ENCODE measurements at regions of chr16 and their contacts with region 1.

Region 1: DNA sequence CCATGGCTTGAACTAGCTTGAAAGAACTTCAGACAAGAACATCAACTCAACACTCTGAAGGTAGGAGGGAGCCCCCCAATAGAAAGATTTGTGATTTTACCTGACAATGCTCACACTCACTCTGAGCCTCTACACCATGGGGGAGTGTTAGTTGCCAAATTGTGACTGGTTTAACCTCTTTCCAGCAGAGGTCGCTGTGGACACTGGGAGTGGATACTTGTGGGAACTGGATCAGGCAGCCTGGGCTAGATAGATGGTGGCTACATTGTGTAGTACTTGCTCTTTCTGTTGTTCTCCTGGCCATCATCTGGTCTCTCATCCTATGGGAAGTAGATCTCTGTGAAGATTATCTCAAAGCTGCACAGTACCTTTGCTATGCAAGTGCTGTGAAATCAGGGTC is 2.9 kb downstream of the SMPD3 start:
- DNase-seq: peak; percentile 77
- H3K4me3 Mint-ChIP-seq: no peak overlapping the region
- H3K27ac Mint-ChIP-seq: no peak overlapping the region
- H3K4me1 Mint-ChIP-seq: peaks cover 18% of the 10 kb centered on the region
- H3K27me3 Mint-ChIP-seq: peaks cover 71% of the 10 kb centered on the region

Region 2: DNA sequence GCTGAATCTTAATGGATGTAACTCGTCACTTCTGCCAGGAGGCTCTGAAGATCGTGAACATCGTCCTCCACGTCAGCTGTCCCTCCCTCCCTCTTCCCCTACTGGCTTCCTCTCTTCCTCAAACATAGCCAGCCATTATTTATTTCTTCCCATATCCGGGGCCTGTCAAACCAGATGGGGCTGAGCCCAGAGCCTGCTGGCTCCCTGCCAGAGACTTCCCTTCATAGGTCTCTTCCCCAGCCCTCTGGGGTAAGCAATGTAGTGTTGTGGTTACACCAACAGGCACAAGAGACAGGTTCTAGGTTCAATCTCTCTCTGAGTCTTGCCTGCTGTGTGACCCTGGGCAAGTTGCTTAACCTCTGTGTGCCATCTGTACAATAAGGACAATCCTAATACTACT is 53.5 kb after region 1 on chr16:
- CTCF ChIA-PET with region 1: no interaction called
- DNase-seq: no peak
- H3K4me3 Mint-ChIP-seq: no peak overlapping the region
- H3K27ac Mint-ChIP-seq: no peak overlapping the region
- H3K4me1 Mint-ChIP-seq: no peaks in the 10 kb centered on the region
- H3K27me3 Mint-ChIP-seq: peaks cover 34% of the 10 kb centered on the region

Region 3: GRCh38 chr16:68512183-68512582 is 66.7 kb after region 1 on chr16:
- CTCF ChIA-PET with region 1: interaction called, 32 read pairs
- DNase-seq: no peak
- H3K4me3 Mint-ChIP-seq: no peak overlapping the region
- H3K27ac Mint-ChIP-seq: no peak overlapping the region
- H3K4me1 Mint-ChIP-seq: peaks cover 6% of the 10 kb centered on the region
- H3K27me3 Mint-ChIP-seq: peaks cover 40% of the 10 kb centered on the region

Region 4: GRCh38 chr16:68520649-68521086 is 75.2 kb after region 1 on chr16:
- CTCF ChIA-PET with region 1: interaction called, 10 read pairs
- DNase-seq: peak; percentile 93
- H3K4me3 Mint-ChIP-seq: peak overlapping the region; percentile 23
- H3K27ac Mint-ChIP-seq: no peak overlapping the region
- H3K4me1 Mint-ChIP-seq: peaks cover 8% of the 10 kb centered on the region
- H3K27me3 Mint-ChIP-seq: peaks cover 42% of the 10 kb centered on the region

Measured in activated naive CD4-positive, alpha-beta T cell treated with anti-CD3 and anti-CD28 coated beads, Interleukin-2, amount 10 ng/mL, durations not matched to agents 7 days and 5 days (primary cell).